Right ventricle myocardium inferior (tissue), 1 donor: ENCODE measurements at regions of chr12 and their contacts with region 1.

Region 1: GRCh38 chr12:22544038-22544979 is at the start of gene C2CD5:
- DNase-seq: peak; percentile 98
- ATAC-seq: peak; percentile 97
- total RNA-seq, gene C2CD5: 22.0 TPM

Region 2: DNA sequence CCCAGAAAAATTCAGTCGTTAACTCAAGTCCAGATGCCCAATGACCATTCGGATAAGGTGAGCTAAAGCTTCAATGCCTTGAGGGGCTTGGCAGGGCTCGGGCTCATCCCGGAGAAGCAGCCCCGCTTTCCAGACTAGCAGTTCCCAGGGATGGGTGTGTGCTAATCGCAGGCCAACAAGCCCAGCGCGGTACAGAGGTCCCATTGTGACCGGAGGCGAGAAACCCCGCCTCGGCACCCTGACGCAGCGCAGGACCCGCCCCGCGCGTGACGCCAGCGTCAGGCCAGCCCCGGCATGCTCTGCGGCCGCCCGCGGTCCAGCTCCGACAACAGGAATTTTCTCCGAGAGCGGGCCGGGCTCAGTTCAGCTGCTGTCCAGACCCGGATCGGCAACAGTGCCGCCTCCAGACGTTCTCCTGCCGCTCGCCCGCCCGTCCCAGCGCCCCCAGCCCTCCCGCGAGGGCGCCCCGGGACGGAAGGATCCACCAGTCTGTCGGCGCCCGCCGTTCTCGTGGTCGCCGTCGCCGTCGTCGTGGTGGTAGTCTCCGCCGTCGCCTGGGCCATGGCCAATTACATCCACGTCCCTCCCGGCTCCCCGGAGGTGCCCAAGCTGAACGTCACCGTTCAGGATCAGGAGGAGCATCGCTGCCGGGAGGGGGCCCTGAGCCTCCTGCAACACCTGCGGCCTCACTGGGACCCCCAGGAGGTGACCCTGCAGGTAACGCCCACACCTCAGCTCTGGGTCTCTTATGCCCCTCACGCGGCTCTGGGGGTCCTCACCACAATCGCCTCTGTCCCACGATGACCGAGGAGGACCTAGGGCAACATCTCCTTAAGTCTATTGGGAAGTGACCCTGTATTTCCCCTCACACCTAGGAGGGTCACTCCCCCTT is 80.8 kb after region 1 on chr12 and contains the start of gene ETNK1:
- intact Hi-C with region 1: loop called (anchors 1 kb)
- DNase-seq: peak; percentile 98
- ATAC-seq: peak; percentile 100
- total RNA-seq, gene ETNK1: 17.0 TPM